ENCODE measurements at regions of chr5 and their contacts with region 1.

Region 1: GRCh38 chr5:174338185-174339010 is 292.9 kb downstream of the NSG2 start:
- DNase-seq: peak in 1 of 2 donors; percentile 51
- ATAC-seq: peak; percentile 40
- H3K4me3 ChIP-seq: no peak overlapping the region
- H3K27ac ChIP-seq: no peak overlapping the region
- H3K4me1 ChIP-seq: no peaks in the 10 kb centered on the region
- H3K27me3 ChIP-seq: no peaks in the 10 kb centered on the region

Region 2: DNA sequence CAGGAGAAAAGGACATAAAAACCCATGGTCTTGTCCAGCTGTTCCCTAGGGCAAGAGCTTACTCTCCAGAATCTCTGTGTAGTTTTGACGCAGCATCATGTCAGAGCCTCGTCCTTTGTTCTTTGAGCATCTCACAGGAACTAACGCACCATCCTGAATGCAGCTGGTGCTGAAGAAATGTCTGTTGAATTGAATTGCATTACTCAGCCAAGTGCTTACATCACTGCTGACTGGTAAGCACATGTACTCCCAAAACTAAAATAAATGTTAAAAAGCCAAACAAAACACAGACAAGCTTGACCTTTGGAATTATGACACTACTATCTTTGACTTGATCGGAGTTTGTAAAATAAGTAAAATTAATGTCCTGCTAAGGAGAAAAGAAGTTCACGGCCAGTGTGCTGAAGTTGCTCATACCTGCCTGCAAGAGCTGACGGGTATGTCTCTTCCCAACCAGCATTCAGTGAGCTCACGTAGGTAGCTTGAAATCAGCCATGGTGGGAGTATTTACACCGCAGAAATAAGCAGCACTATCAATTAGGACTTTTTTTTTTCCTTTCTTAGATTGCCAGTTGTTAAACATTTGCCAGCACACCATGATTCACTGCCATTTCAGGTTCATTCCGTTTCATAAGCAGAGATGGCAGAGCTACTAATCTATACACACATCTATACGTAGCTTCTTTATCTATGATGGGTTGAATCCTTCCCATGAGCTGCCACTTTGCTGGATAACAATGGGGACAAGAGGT is 75.3 kb after region 1 on chr5:
- intact Hi-C with region 1: loop called in 1 of 2 experiments (anchors 5 kb)
- DNase-seq: no peak
- ATAC-seq: no peak
- H3K4me3 ChIP-seq: no peak overlapping the region
- H3K27ac ChIP-seq: no peak overlapping the region
- H3K4me1 ChIP-seq: peaks cover 0 to 2% of the 10 kb centered on the region in 2 donors
- H3K27me3 ChIP-seq: no peaks in the 10 kb centered on the region